ENCODE measurements at regions of chr14 and their contacts with region 1.

Region 1: DNA sequence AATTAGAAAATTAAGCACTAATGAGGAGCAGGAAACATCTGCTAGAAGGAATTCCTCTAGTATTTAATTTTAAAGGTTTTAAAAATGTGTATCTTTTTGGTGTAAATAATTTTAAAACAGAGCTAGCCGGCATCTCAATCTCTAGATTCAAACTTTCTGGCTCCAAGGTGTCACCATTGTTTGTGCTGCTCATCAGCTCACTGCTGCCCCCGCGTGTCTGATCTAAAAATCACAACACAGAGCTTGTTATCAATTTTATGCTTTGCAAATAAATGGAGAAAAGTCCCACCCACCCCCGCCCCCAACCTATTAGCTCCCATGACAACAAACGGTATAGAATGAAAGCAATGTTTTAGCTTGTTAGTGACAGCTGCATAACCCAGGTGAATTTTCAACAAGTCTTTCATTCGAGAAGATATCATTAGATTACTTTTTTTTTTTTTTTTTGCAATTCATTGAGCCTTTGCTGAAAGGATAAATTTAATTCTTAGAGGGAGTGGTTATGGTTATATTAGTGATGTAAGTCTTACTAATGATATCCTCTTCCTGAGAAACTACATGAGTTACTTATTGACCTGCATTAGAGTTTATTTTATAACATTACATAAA is 11.3 kb upstream of the ABHD12B start:
- DNase-seq: peak; percentile 94
- ATAC-seq: peak; percentile 47
- H3K4me3 Mint-ChIP-seq: peak overlapping the region; percentile 54; the same call in 1 of the 2 replicates
- H3K27ac Mint-ChIP-seq: peak overlapping the region; percentile 78; the same call in 1 of the 2 replicates
- H3K4me1 Mint-ChIP-seq: peaks cover 52% of the 10 kb centered on the region
- H3K27me3 Mint-ChIP-seq: no peaks in the 10 kb centered on the region; the same call in none of the 2 replicates
- CTCF ChIP-seq: peak; percentile 54

Region 2: GRCh38 chr14:50756300-50756699 is 104.3 kb before region 1 on chr14:
- CTCF ChIA-PET with region 1: interaction called, 10 read pairs
- POLR2A ChIA-PET with region 1: no interaction called
- DNase-seq: no peak
- ATAC-seq: no peak
- H3K4me3 Mint-ChIP-seq: no peak overlapping the region
- H3K27ac Mint-ChIP-seq: no peak overlapping the region
- H3K4me1 Mint-ChIP-seq: no peaks in the 10 kb centered on the region
- H3K27me3 Mint-ChIP-seq: no peaks in the 10 kb centered on the region
- CTCF ChIP-seq: no peak

Region 3: GRCh38 chr14:50785457-50786063 is 75.0 kb before region 1 on chr14:
- CTCF ChIA-PET with region 1: interaction called, 21 read pairs
- POLR2A ChIA-PET with region 1: no interaction called
- DNase-seq: no peak
- ATAC-seq: peak; percentile 73
- H3K4me3 Mint-ChIP-seq: no peak overlapping the region
- H3K27ac Mint-ChIP-seq: peak overlapping the region; percentile 79; the same call in 1 of the 2 replicates
- H3K4me1 Mint-ChIP-seq: peaks cover 46% of the 10 kb centered on the region
- H3K27me3 Mint-ChIP-seq: no peaks in the 10 kb centered on the region
- CTCF ChIP-seq: no peak

Region 4: DNA sequence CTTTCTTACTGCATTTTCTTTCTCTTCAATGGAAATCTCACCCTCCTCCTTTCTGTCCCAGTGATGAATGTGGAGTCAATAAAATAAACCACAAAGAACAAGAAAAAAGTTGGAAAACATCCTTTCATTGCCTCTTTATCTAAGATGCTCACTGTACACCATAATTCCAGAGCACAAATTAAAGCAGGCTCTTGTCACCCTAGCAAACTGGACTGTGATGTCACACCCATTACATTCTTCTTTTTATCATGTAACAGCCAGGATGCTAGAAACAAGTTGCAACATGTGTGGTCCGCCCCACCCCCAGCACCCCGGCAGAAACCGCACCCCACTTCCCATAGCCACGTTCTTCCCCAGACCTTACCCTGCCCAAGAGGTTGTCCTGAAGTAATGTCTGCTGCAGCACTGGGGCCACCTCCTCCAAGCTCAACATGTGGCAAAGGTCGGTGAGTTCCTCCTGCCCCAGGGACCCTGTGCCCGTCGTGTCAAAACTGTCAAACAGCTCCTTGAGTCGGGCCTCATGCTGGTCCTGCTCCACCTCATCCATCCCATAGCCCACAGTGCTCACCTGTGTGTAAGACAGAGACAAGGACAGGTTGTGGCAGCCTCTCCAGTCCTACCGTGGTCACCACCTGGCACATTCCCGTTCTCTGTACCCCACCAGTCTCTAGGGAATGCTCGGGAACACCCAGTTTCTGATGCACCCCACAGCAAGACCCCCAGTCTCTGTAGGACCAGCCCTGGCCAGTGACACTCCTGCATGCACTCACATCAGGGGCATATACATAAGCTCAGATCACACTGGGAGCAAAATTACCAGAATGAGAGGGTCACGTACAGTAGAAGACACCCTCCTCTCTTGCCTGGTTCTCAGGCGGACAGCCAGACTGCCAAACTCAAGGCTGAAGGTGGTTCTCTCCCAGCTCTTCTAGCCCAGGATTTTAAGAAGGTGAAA is 38.8 kb before region 1 on chr14:
- CTCF ChIA-PET with region 1: interaction called, 10 read pairs
- POLR2A ChIA-PET with region 1: no interaction called
- DNase-seq: no peak
- ATAC-seq: peak; percentile 23
- H3K4me3 Mint-ChIP-seq: no peak overlapping the region; the same call in 1 of the 2 replicates
- H3K27ac Mint-ChIP-seq: no peak overlapping the region
- H3K4me1 Mint-ChIP-seq: peaks cover 57% of the 10 kb centered on the region
- H3K27me3 Mint-ChIP-seq: peaks cover 56% of the 10 kb centered on the region
- CTCF ChIP-seq: no peak

Region 5: DNA sequence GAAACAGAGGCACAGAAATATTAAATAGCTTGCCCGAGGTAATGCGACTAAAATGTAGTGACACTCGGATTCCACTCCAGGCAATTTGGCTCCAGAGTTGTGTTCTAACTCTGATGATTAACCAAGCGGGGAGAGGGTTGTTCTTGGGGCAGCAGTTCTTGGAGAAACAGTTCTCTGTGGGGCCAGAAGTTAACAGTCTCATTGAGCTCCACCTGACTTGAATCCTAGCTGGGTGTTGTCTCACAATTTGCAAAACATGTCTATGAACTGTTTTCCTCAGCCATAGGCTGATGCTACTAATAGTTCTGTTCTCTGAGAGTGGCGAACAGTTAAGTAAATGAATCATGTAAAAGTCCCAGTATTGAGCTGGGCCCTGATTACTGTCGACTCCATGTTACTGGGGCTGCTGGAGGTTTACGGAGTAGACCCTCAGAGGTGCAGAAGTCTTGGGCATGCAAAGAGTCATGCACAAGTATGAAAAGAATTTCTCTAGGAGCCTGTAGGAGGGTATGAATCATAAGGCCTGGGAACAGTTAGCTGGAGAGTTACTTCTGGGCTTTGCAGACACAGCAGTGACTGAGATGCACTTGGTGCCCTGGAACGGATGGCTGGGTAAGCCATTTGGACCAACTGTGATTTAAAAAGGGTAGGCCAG is 14.2 kb before region 1 on chr14:
- CTCF ChIA-PET with region 1: interaction called, 25 read pairs
- POLR2A ChIA-PET with region 1: no interaction called
- DNase-seq: no peak
- ATAC-seq: no peak
- H3K4me3 Mint-ChIP-seq: no peak overlapping the region
- H3K27ac Mint-ChIP-seq: no peak overlapping the region
- H3K4me1 Mint-ChIP-seq: 0 out of 2 replicates have a peak, but pooled peaks cover 6% of the 10 kb centered on the region
- H3K27me3 Mint-ChIP-seq: no peaks in the 10 kb centered on the region
- CTCF ChIP-seq: no peak

Region 6: GRCh38 chr14:50910589-50910988 is 50.0 kb after region 1 on chr14:
- CTCF ChIA-PET with region 1: interaction called, 17 read pairs
- POLR2A ChIA-PET with region 1: no interaction called
- DNase-seq: no peak
- ATAC-seq: peak; percentile 84
- H3K4me3 Mint-ChIP-seq: no peak overlapping the region
- H3K27ac Mint-ChIP-seq: peak overlapping the region; percentile 94
- H3K4me1 Mint-ChIP-seq: peaks cover 62% of the 10 kb centered on the region
- H3K27me3 Mint-ChIP-seq: no peaks in the 10 kb centered on the region
- CTCF ChIP-seq: no peak

Region 7: DNA sequence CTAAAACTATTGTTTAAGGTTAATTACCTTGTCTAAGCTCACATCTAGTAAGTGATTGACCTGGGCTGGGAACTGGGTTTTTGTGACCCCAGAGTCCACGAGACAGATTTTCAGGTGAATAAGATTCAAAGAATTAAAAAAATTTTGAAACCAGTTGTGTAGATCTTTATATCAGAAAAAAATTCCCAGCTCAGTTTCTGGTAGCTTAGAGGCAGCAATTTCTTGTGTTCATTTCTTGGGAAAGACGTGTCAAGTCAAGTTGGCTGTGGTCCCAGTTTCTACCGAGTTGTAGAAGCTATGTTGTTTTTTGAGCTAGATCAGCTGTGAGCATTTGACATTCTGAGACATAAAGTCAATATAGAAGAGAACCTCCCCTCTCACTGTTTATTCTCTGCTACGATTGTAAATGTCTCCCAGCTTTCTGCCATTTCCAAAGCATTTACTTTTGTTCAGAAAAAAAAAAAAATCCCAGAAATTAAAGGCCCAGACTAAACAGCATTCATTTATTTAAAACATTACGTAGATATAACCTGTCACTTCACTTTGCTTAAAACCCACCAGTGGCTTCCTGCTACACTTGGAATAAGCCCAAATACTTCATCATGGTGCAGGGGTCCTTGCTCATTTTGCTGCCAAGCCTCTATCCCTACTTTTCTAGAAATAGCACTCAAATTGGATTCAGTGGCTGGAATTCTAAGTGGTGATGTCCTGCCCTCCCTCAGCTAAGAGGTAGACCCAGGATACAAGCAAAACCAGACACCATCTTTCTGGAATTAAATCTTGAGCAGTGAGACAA is 104.2 kb after region 1 on chr14:
- CTCF ChIA-PET with region 1: no interaction called
- POLR2A ChIA-PET with region 1: no interaction called
- DNase-seq: no peak
- ATAC-seq: no peak
- H3K4me3 Mint-ChIP-seq: no peak overlapping the region
- H3K27ac Mint-ChIP-seq: no peak overlapping the region
- H3K4me1 Mint-ChIP-seq: no peaks in the 10 kb centered on the region
- H3K27me3 Mint-ChIP-seq: no peaks in the 10 kb centered on the region
- CTCF ChIP-seq: no peak

Measured in WTC11 (cell line).